ENCODE measurements at regions of chr18 and their contacts with region 1.

Region 1: DNA sequence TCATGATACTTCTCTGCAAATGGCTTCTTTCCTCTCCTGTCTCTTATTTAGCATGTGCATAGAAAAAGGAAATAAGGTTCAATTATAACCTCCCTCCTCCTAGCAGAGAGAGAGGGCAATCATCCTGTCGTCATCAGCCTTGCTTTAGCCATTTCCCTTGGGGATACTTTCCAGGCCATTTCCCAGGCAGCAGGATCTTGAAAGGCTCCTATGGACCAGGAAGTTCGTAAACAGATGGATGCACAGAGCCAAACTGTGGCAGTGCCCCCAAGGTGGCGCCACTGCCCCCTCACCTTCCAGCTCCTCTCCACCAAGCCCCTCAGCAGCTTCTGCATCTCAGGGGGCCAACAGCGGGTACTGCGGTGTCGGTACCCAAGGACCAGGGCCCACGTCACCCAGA is 157.4 kb downstream of the DTNA start:
- DNase-seq: no peak
- H3K4me3 Mint-ChIP-seq: no peak overlapping the region
- H3K27ac Mint-ChIP-seq: no peak overlapping the region
- H3K4me1 Mint-ChIP-seq: no peaks in the 10 kb centered on the region
- H3K27me3 Mint-ChIP-seq: no peaks in the 10 kb centered on the region
- CTCF ChIP-seq: no peak

Region 2: GRCh38 chr18:35143622-35144596 is 276.4 kb after region 1 on chr18:
- CTCF ChIA-PET with region 1: interaction called, 16 read pairs
- intact Hi-C with region 1: loop called (anchors 2 kb)
- DNase-seq: peak; percentile 60
- H3K4me3 Mint-ChIP-seq: no peak overlapping the region
- H3K27ac Mint-ChIP-seq: no peak overlapping the region
- H3K4me1 Mint-ChIP-seq: no peaks in the 10 kb centered on the region
- H3K27me3 Mint-ChIP-seq: no peaks in the 10 kb centered on the region
- CTCF ChIP-seq: peak; percentile 64

Region 3: GRCh38 chr18:35355140-35355618 is 487.7 kb after region 1 on chr18:
- CTCF ChIA-PET with region 1: no interaction called
- intact Hi-C with region 1: loop called (anchors 10 kb)
- DNase-seq: peak; percentile 63
- H3K4me3 Mint-ChIP-seq: no peak overlapping the region
- H3K27ac Mint-ChIP-seq: no peak overlapping the region
- H3K4me1 Mint-ChIP-seq: no peaks in the 10 kb centered on the region
- H3K27me3 Mint-ChIP-seq: no peaks in the 10 kb centered on the region
- CTCF ChIP-seq: peak; percentile 35

Measured in Calu3 (cell line).